Activated naive CD4-positive, alpha-beta T cell treated with anti-CD3 and anti-CD28 coated beads for 36 hours (primary cell): ENCODE measurements at regions of chr19 and their contacts with region 1.

Region 1: DNA sequence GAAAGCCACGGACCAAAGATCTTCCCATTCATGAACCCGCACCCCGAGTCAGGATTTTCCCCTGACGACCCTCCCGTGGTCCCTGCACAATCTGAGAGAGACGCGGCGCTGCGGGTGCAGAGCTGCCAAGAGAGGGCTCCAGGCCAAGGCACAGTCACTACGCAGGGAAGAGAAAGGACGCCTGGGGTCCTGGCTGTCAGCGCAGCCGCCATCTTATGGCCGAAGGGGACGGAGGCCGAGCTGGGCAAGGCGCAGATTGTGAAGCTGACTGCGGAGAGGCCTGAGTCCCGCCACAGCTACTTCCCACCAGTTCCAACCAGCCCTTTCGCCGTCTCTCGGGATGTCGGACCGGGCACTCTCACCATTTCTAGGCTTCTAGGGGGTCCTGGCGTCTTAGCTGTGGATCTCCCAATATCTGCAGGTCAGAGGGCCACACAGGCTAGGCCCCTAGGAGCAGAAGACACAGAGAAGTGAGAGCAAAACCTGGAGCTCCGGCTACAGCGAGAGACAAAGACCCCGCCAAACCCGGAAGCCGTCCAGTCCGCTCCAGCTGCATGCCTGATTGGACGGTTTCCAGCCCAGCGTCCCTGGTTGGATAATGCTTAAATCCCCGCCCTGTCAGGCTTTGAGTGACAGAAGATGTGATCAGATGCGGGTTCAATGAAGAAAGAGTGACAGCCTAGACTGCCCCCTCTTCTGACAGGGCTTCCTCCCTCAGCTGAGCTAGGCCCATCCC is at the start of gene ZNF100:
- DNase-seq: peak; percentile 94
- H3K4me3 Mint-ChIP-seq: peak within 1 kb of the TSS; percentile 78
- H3K27ac Mint-ChIP-seq: peak within 1 kb of the TSS; percentile 84
- H3K4me1 Mint-ChIP-seq: peaks cover 24% of the 10 kb centered on the region
- H3K27me3 Mint-ChIP-seq: no peaks in the 10 kb centered on the region
- total RNA-seq, gene ZNF100: 19.3 to 22.7 TPM

Region 2: GRCh38 chr19:20661150-20661819 is 1105.9 kb before region 1 on chr19 and contains the start of gene ZNF626:
- CTCF ChIA-PET with region 1: no interaction called
- intact Hi-C with region 1: loop called (anchors 5 kb)
- DNase-seq: peak; percentile 97
- H3K4me3 Mint-ChIP-seq: peak within 1 kb of the TSS; percentile 93
- H3K27ac Mint-ChIP-seq: peak within 1 kb of the TSS; percentile 91
- H3K4me1 Mint-ChIP-seq: peaks cover 20% of the 10 kb centered on the region
- H3K27me3 Mint-ChIP-seq: no peaks in the 10 kb centered on the region
- total RNA-seq, gene ZNF626: 8.2 to 9.8 TPM

Region 3: DNA sequence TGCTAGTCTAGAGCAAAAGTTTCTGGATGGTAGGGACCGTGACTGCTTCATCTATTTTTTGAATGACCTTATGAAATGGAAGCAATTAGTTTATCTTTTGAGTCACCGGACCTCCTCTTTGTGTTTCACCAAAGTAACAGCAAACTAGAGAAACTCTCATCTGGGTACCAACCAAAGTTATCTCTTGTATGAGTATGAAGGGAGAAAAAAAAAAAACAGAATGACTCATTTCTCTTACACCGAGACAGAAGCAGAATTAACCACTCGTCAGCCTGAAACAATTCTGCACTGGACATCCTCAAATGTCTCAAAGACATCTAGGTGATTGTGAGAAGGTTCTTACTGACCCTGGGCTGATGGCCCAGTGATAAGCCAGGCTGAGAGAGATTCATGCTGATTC is 18.1 kb before region 1 on chr19:
- CTCF ChIA-PET with region 1: no interaction called
- intact Hi-C with region 1: loop called (anchors 1 kb)
- DNase-seq: no peak
- H3K4me3 Mint-ChIP-seq: no peak overlapping the region
- H3K27ac Mint-ChIP-seq: no peak overlapping the region
- H3K4me1 Mint-ChIP-seq: peaks cover 16% of the 10 kb centered on the region
- H3K27me3 Mint-ChIP-seq: no peaks in the 10 kb centered on the region

Region 4: DNA sequence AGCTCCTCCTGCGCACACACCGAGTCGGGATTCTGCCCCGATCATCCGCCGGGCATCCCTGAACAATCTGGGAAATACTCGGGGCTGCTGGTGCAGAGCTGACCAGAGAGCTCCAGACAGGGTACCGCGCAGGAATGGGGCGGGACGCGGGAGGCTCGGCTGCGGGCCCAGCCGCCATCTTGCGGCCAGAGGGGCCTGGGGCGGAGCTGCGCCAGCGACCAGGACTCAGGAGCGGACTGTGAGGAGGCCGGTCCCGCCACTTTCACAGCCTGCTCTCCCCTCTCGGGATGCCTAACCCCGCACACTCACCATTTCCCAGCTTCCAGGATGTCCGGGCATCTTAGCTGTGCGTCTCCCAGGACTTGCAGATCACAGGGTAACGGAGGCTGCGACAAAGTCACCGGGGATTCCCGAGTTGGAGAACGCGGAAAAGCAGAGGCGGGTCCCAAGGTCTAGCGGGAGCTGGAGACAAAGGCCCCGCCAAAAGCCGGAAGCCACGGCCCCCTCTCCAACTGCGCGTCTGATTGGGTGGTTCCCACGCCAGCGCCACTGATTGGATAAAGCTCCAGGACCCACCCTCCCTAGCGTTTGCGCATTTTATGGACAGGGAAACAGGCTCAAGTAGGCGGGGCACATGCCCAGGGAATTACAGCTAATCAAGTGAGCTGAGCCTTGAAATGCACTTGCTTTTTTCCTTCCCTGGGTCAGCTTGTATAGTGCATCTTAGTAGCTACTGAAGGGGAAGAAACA is 84.5 kb after region 1 on chr19:
- CTCF ChIA-PET with region 1: no interaction called
- intact Hi-C with region 1: loop called (anchors 1 kb)
- DNase-seq: peak; percentile 97
- H3K4me3 Mint-ChIP-seq: peak overlapping the region; percentile 88
- H3K27ac Mint-ChIP-seq: peak overlapping the region; percentile 91
- H3K4me1 Mint-ChIP-seq: peaks cover 31% of the 10 kb centered on the region
- H3K27me3 Mint-ChIP-seq: no peaks in the 10 kb centered on the region